Activated CD4-positive, alpha-beta T cell treated with anti-CD3 and anti-CD28 coated beads, Interleukin-2, amount 10 ng/mL, durations not matched to agents 7 days and 5 days (primary cell): ENCODE measurements at regions of chr1 and their contacts with region 1.

Region 1: DNA sequence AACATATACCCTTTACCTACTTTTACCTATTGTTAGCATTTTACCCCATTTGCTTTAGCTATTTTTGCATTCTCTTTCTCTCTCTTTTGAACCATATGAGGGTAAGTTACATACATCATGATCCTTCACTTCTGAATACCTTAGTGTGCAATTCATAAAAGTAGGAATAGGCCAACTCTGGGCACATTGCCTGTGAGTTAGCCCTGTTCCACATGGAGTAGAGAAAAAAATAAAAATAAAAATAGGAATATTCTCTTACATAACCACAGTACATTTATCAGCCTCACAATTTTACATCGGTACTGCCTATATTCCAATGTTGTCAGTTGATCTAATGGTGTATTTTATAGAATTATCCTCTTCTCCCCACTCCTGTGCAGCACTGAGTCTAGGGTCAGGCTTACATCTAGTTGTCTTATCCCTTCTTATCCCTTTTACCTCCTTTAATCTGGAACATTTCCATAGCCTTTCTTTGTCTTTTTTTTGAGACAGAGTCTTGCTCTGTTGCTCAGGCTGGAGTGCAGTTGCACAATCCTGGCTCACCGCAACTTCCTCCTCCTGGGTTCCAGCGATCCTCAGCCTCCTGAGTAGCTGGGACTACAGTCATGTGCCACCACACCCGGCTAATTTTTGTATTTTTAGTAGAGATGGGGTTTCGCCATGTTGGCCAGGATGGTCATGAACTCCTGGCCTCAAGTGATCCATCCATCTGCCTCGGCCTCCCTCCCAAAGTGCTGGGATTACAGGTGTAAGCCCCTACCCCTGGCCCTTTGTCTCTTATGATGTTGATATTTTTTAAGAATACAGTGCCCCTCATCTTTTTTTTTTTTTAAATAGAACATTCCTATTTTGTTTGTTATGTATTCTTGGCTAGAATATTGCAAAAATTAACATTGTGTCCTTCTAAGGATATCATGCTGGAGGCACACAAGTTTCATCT is 11.1 kb upstream of the SLC30A1 start:
- DNase-seq: no peak
- H3K4me3 Mint-ChIP-seq: no peak overlapping the region
- H3K27ac Mint-ChIP-seq: no peak overlapping the region
- H3K4me1 Mint-ChIP-seq: peaks cover 9% of the 10 kb centered on the region
- H3K27me3 Mint-ChIP-seq: no peaks in the 10 kb centered on the region

Region 2: DNA sequence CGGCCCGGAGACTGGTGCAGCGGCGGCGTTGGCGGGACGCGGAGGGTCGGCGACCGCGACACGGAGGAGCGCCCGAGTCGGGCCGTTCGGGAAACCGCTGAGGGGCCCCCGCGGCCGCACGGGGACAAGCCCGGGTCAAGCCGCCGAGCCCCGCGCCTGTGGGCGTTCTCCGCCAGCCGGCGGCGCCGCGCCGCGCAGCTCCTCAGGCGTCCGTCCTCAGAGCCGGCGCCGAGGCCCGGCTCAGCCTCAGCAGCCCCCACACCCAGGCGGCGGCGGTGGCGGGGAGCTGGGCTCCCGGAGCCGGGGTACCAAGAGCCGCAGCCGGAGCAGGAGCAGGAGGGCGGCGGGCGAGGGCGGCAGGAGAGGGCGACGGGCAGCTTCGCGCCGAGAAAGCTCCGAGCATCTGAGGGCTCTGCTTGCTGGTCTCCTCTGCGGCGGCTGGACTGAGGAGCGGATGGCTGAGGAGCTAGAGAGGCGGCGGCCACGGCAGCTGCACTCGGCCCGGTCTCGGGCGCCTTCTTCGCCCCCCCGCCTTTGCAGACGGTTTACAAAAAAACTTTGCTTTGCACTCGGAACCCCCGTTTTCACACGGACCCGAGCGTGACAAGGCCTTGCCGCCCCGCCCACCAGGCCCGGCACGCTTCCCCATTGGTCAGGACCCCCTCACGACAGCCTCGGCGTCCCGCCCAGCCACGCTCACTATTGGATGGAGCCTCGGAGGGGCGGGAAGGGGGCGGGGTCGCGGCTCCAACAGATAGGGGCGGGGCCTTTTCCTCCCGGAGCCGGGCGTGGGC is 11.2 kb before region 1 on chr1 and contains the start of gene SLC30A1:
- CTCF ChIA-PET with region 1: interaction called, 12 read pairs
- POLR2A ChIA-PET with region 1: no interaction called
- DNase-seq: peak; percentile 100
- H3K4me3 Mint-ChIP-seq: peak within 1 kb of the TSS; percentile 93
- H3K27ac Mint-ChIP-seq: peak within 1 kb of the TSS; percentile 87
- H3K4me1 Mint-ChIP-seq: peaks cover 48% of the 10 kb centered on the region
- H3K27me3 Mint-ChIP-seq: no peaks in the 10 kb centered on the region
- total RNA-seq, gene SLC30A1: 9.3 to 9.6 TPM